ENCODE measurements at regions of chr19 and their contacts with region 1.

Region 1: DNA sequence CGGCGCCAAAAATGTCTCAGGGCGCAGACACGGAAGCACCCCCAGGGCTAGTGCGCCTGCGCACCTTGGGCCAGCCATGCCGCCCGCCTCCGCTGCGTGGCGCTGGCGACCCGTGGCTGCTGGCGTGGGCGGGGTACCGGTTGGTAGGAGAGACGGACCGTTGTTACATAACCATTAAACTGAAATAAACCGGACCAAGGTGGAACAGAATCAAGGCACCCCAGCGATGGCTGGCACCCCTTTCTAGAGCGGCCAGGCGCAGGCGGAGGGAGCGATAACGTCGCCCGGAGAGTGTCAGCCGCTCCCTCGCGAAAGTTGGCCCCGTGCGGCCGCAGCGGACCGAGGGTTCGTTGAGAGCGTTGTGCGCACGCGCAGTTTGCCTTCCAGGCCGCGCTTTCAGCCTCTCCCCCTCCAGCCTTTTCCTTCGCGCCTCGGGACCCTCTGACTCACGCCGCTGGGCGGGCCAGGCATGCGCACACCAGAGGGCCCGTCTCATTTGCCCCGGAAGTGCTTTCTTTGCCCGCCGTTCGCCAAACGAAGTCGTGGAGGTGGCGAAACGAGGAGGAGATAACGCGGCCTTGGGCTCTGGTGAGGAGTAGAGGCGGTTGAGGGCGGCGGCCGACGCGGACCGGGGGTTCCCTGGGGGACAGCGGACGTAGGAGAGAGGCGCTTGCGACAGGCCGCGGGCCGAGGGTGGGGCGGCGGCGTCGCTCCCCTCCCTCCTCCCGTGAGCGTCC is at the starts of genes PLEKHJ1 and SF3A2:
- DNase-seq: peak; percentile 95 to 98
- H3K4me3 ChIP-seq: peak within 1 kb of the TSS; percentile 70 to 73
- H3K27ac ChIP-seq: peak within 1 kb of the TSS; percentile 88 to 98
- H3K4me1 ChIP-seq: peaks cover 0 to 71% (median 54%) of the 10 kb centered on the region in 4 donors
- H3K27me3 ChIP-seq: no peaks in the 10 kb centered on the region
- CTCF ChIP-seq: peak; percentile 99 to 100

Region 2: GRCh38 chr19:2168619-2169424 is 67.7 kb before region 1 on chr19:
- intact Hi-C with region 1: loop called (anchors 5 kb)
- DNase-seq: peak; percentile 99 to 100
- H3K4me3 ChIP-seq: peak overlapping the region in 1 of 2 donors; percentile 13
- H3K27ac ChIP-seq: peak overlapping the region; percentile 76 to 90
- H3K4me1 ChIP-seq: peaks cover 6 to 74% (median 58%) of the 10 kb centered on the region in 4 donors
- H3K27me3 ChIP-seq: no peaks in the 10 kb centered on the region
- CTCF ChIP-seq: no peak

Region 3: GRCh38 chr19:2273356-2274184 is 37.1 kb after region 1 on chr19:
- intact Hi-C with region 1: loop called (anchors 5 kb)
- DNase-seq: peak; percentile 54 to 81
- H3K4me3 ChIP-seq: peak overlapping the region; percentile 2 to 10
- H3K27ac ChIP-seq: peak overlapping the region; percentile 25 to 64
- H3K4me1 ChIP-seq: peaks cover 0 to 56% (median 43%) of the 10 kb centered on the region in 4 donors
- H3K27me3 ChIP-seq: no peaks in the 10 kb centered on the region
- CTCF ChIP-seq: peak; percentile 95

Region 4: GRCh38 chr19:2391118-2391725 is 154.7 kb after region 1 on chr19:
- intact Hi-C with region 1: loop called (anchors 5 kb)
- DNase-seq: no peak
- H3K4me3 ChIP-seq: no peak overlapping the region
- H3K27ac ChIP-seq: no peak overlapping the region
- H3K4me1 ChIP-seq: peaks cover 0 to 11% (median 0%) of the 10 kb centered on the region in 4 donors
- H3K27me3 ChIP-seq: peaks cover 0 to 29% of the 10 kb centered on the region in 2 donors
- CTCF ChIP-seq: peak; percentile 72 to 75

Measured in tibial artery (tissue), 4 donors.